ENCODE measurements at regions of chr14 and their contacts with region 1.

Region 1: DNA sequence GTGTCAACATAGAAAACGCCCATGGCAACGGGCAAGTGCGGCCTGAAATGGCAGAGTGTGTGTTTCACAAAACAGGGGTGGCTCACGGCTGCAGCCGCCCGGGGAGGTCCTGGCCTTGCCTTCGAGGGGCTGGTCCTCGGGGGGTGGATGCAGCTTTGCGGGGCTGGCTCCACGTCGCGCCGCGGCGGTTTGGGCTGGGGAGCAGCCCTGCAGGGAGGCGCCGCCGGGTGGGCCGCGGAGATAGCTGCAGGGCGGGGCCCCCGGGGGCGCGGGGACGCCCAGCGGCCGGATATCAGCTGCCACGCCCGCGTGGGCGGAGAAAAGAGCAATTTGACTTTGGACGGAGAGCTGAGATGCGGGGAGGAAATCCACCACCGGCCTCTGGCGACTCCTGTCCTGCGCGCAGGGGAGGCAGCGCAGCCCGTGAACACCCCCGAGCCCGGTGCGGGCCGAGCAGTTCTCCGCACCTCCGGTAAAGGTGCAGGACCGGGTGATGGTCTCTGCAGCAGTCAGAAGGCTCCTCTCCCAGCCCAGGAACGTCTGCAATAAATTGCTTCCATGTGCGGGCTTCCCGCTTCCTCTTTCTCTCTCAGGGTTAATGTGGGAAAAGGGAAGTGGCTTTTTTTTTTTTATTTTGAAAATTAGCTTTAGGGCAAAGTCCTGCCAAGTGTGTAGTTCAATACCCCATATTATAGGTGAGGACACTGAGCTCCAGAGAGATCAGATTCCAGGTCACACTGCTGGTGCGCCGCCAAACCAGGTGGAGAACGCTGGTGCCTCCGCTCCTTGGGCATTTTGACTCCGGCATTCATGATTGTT is 110.5 kb downstream of the ARF6 start:
- DNase-seq: peak; percentile 33 to 90
- H3K4me3 ChIP-seq: peak overlapping the region; percentile 62 to 69
- H3K27ac ChIP-seq: peak overlapping the region; percentile 96 to 97
- H3K4me1 ChIP-seq: peaks cover 14 to 48% of the 10 kb centered on the region in 2 donors
- H3K27me3 ChIP-seq: no peaks in the 10 kb centered on the region
- CTCF ChIP-seq: peak in 1 of 3 experiments; percentile 34

Region 2: DNA sequence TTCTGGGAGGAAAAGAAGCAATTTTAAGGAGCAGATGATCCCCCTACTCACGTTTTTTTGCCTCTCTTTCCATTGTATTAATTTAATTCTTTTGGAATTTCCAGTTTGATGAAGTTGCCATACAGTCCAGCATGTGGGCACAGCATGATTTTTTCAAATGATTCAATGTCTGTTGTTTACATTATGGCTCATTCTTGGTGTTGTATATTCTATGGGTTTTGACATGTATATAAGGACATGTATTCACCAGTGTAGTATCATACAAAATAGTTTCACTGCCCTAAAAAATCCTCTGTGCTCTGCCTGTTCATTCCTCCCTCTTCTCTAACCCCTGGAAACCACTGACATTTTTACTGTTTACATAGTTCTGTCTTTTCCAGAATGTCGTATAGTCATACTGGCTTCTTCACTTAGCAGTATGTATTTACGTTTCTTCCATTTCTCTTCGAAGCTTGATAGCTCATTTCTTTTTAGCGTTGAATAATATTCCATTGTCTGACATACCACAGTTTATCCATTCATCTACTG is 248.8 kb before region 1 on chr14:
- intact Hi-C with region 1: no loop called
- DNase-seq: no peak
- H3K4me3 ChIP-seq: no peak overlapping the region
- H3K27ac ChIP-seq: no peak overlapping the region
- H3K4me1 ChIP-seq: no peaks in the 10 kb centered on the region
- H3K27me3 ChIP-seq: no peaks in the 10 kb centered on the region
- CTCF ChIP-seq: no peak

Region 3: GRCh38 chr14:49975276-49975675 is 28.1 kb before region 1 on chr14:
- intact Hi-C with region 1: loop called (anchors 2 kb)
- DNase-seq: no peak
- H3K4me3 ChIP-seq: no peak overlapping the region
- H3K27ac ChIP-seq: peak overlapping the region; percentile 84 to 85
- H3K4me1 ChIP-seq: peaks cover 14 to 48% of the 10 kb centered on the region in 2 donors
- H3K27me3 ChIP-seq: no peaks in the 10 kb centered on the region
- CTCF ChIP-seq: no peak

Region 4: DNA sequence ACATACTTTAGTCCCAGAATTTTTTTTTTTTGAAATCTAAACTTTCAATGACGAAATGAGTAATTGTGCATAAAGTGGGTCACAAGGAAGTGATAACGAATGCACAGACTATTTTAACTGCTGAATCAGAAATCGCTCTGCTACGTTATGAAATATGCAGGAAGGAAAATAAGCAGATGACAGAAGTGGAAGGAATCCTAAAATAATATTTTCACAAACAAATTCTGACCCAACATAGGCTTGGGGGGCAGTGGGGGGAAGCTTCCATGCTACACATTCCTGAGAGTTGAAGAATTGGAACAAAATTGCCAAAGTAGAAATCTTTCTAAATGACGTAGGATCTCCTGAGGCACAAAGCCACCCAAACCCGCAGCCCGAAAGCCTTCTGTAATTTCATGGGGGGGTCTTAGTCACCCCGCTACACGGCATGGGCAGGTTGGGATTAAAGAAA is 20.9 kb before region 1 on chr14:
- intact Hi-C with region 1: loop called (anchors 1 kb)
- DNase-seq: peak in 1 of 2 donors; percentile 86
- H3K4me3 ChIP-seq: peak overlapping the region; percentile 36 to 53
- H3K27ac ChIP-seq: peak overlapping the region; percentile 80 to 89
- H3K4me1 ChIP-seq: peaks cover 6 to 25% of the 10 kb centered on the region in 2 donors
- H3K27me3 ChIP-seq: no peaks in the 10 kb centered on the region
- CTCF ChIP-seq: no peak

Region 5: GRCh38 chr14:50018201-50018932 is 14.9 kb after region 1 on chr14:
- intact Hi-C with region 1: loop called (anchors 1 kb)
- DNase-seq: peak in 1 of 2 donors; percentile 86
- H3K4me3 ChIP-seq: no peak overlapping the region
- H3K27ac ChIP-seq: peak overlapping the region; percentile 79 to 80
- H3K4me1 ChIP-seq: peaks cover 3 to 39% of the 10 kb centered on the region in 2 donors
- H3K27me3 ChIP-seq: no peaks in the 10 kb centered on the region
- CTCF ChIP-seq: no peak

Region 6: GRCh38 chr14:50396631-50397390 is 393.4 kb after region 1 on chr14 and contains the start of gene CDKL1:
- intact Hi-C with region 1: no loop called
- DNase-seq: peak in 1 of 2 donors; percentile 73
- H3K4me3 ChIP-seq: peak within 1 kb of the TSS; percentile 82 to 83
- H3K27ac ChIP-seq: peak within 1 kb of the TSS; percentile 50 to 69
- H3K4me1 ChIP-seq: peaks cover 0 to 14% of the 10 kb centered on the region in 2 donors
- H3K27me3 ChIP-seq: no peaks in the 10 kb centered on the region
- CTCF ChIP-seq: no peak
- total RNA-seq, gene CDKL1: 0.85 TPM

Measured in ascending aorta (tissue), 2 donors.